ENCODE measurements at regions of chr17 and their contacts with region 1.

Region 1: DNA sequence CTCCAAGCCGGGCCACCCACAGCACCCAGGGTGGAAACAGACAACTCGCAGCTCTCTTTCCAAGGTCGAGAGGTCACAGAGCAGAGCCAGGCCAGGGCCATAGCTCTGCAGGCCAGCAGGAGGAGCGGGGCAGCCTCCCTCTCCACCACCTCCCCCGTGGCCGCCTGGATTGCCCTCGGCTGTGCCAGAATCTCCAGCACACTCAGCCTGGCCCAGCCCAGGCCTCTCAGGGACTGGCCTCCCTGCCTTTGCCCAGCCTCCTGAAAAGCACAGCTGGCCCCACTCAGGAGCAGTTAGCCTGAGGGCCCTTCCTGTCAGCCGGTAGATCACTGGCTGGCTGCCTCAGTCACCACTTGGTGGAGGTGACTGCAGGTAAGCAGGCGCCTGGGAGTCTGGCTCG is 85.8 kb upstream of the SEC14L1 start:
- DNase-seq: peak; percentile 87
- H3K4me3 ChIP-seq: no peak overlapping the region
- H3K27ac ChIP-seq: no peak overlapping the region
- H3K4me1 ChIP-seq: peaks cover 0 to 18% of the 10 kb centered on the region in 2 experiments; a peak in 1 of 4 replicates
- H3K27me3 ChIP-seq: peaks cover 49% of the 10 kb centered on the region
- CTCF ChIP-seq: no peak
- EP300 ChIP-seq: 0 out of 4 replicates have a peak, but pooled peaks of 1 of the 2 experiments have one; percentile 45
- RAD21 ChIP-seq: 0 out of 2 replicates have a peak, but pooled peaks have one; percentile 8

Region 2: GRCh38 chr17:76843703-76844484 is 211.0 kb before region 1 on chr17:
- CTCF ChIA-PET with region 1: interaction called, 35 read pairs
- POLR2A ChIA-PET with region 1: no interaction called
- DNase-seq: peak; percentile 59
- H3K4me3 ChIP-seq: no peak overlapping the region
- H3K27ac ChIP-seq: peak overlapping the region in 1 of 2 experiments; percentile 50; a peak in 2 of 4 replicates
- H3K4me1 ChIP-seq: peaks cover 4 to 51% of the 10 kb centered on the region in 2 experiments; a peak in 2 of 4 replicates
- H3K27me3 ChIP-seq: peaks cover 32% of the 10 kb centered on the region; the same call in 1 of the 2 replicates
- CTCF ChIP-seq: no peak
- EP300 ChIP-seq: no peak
- RAD21 ChIP-seq: peak; percentile 31

Region 3: DNA sequence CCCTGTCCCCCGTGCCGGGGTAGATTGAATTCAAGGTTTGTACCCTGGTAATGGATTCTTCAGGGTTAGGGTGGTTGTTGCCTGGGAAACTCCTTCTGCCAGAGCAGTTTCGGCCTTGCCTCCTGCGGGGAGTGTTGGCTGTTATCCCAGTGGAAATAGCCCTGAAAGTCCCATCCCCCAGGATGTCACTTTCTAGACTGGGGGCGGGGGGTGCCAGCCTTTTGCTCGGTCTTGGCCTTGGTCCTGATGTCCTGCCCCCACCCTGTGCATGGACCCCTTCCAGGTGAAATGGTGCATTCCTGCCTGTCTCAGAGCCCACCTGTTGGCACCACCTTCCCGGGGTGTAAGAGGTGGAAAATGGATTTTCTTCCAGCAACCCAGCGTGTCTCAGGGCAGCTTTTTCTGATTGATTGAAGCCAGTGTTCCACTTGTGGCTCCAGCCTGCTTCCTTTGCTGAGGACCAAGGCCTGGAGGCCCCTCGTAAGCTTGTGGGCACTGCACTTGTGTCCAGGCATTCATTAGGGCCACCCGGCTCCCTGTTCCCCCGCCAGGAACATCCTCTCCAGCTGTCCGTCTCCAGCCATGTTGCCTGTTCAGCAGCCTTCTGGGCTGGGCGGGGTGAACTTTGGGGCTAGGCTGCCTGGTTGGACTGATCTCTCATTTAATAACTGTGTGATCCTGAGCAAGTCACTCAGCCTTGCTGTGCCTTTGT is 161.2 kb before region 1 on chr17:
- CTCF ChIA-PET with region 1: interaction called, 18 read pairs
- POLR2A ChIA-PET with region 1: no interaction called
- DNase-seq: no peak
- H3K4me3 ChIP-seq: no peak overlapping the region
- H3K27ac ChIP-seq: no peak overlapping the region
- H3K4me1 ChIP-seq: no peaks in the 10 kb centered on the region
- H3K27me3 ChIP-seq: no peaks in the 10 kb centered on the region
- CTCF ChIP-seq: no peak
- EP300 ChIP-seq: no peak
- RAD21 ChIP-seq: no peak

Region 4: GRCh38 chr17:76968707-76969597 is 86.0 kb before region 1 on chr17:
- CTCF ChIA-PET with region 1: interaction called, 17 read pairs
- POLR2A ChIA-PET with region 1: interaction called, 4 read pairs
- DNase-seq: peak; percentile 84
- H3K4me3 ChIP-seq: peak overlapping the region; percentile 28 to 39; a peak in 3 of 4 replicates
- H3K27ac ChIP-seq: peak overlapping the region in 1 of 2 experiments; percentile 85; a peak in 2 of 4 replicates
- H3K4me1 ChIP-seq: peaks cover 3 to 20% of the 10 kb centered on the region in 2 experiments; a peak in 1 of 4 replicates
- H3K27me3 ChIP-seq: peaks cover 41% of the 10 kb centered on the region; the same call in 1 of the 2 replicates
- CTCF ChIP-seq: no peak
- EP300 ChIP-seq: peak in 1 of 2 experiments; percentile 45; a peak in 1 of 4 replicates
- RAD21 ChIP-seq: no peak

Region 5: GRCh38 chr17:77019955-77020379 is 35.0 kb before region 1 on chr17:
- CTCF ChIA-PET with region 1: interaction called, 88 read pairs
- POLR2A ChIA-PET with region 1: no interaction called
- DNase-seq: no peak
- H3K4me3 ChIP-seq: no peak overlapping the region
- H3K27ac ChIP-seq: no peak overlapping the region
- H3K4me1 ChIP-seq: no peaks in the 10 kb centered on the region
- H3K27me3 ChIP-seq: peaks cover 14% of the 10 kb centered on the region
- CTCF ChIP-seq: no peak
- EP300 ChIP-seq: no peak
- RAD21 ChIP-seq: no peak

Region 6: GRCh38 chr17:77088455-77089123 is 33.7 kb after region 1 on chr17:
- CTCF ChIA-PET with region 1: interaction called, 21 read pairs
- POLR2A ChIA-PET with region 1: interaction called, 4 read pairs
- DNase-seq: peak; percentile 93
- H3K4me3 ChIP-seq: peak overlapping the region; percentile 69 to 85
- H3K27ac ChIP-seq: peak overlapping the region; percentile 85 to 87
- H3K4me1 ChIP-seq: peaks cover 5 to 25% of the 10 kb centered on the region in 2 experiments; a peak in 1 of 4 replicates
- H3K27me3 ChIP-seq: no peaks in the 10 kb centered on the region
- CTCF ChIP-seq: peak; percentile 79
- EP300 ChIP-seq: peak in 1 of 2 experiments; percentile 16; a peak in 1 of 4 replicates
- RAD21 ChIP-seq: peak; percentile 48

Measured in SK-N-SH (cell line).